Posterior cingulate gyrus (tissue), 11 donors: ENCODE measurements at regions of chr4 and their contacts with region 1.

Region 1: GRCh38 chr4:16642895-16643294 is 255.6 kb downstream of the LDB2 start:
- DNase-seq: no peak

Region 2: DNA sequence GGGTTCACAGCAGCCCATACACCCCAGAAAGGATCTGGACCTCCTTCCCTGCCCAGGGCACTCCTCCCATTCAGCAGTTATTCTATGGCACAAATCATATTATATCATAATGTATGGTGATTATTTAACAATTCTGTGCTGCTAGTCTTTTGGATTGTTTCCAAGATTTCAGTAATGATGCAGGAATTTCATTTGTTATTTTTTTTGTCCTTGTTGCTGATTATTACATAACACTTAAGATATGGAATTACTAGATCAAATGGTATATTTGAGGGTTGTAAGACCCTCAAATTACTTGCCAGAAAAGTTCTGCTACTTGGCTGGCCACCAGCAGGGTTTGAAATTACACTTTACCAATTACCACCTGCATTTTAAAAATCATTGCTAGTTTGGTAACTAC is 832.6 kb after region 1 on chr4:
- intact Hi-C with region 1: loop called (anchors 10 kb)
- DNase-seq: no peak